Activated naive CD4-positive, alpha-beta T cell treated with anti-CD3 and anti-CD28 coated beads for 36 hours (primary cell): ENCODE measurements at regions of chr11 and their contacts with region 1.

Region 1: GRCh38 chr11:102346748-102347461 is at the start of gene BIRC2:
- DNase-seq: peak; percentile 95
- H3K4me3 Mint-ChIP-seq: peak within 1 kb of the TSS; percentile 77
- H3K27ac Mint-ChIP-seq: peak within 1 kb of the TSS; percentile 99
- H3K4me1 Mint-ChIP-seq: peaks cover 45% of the 10 kb centered on the region
- H3K27me3 Mint-ChIP-seq: no peaks in the 10 kb centered on the region
- total RNA-seq, gene BIRC2: 26.6 to 26.9 TPM

Region 2: DNA sequence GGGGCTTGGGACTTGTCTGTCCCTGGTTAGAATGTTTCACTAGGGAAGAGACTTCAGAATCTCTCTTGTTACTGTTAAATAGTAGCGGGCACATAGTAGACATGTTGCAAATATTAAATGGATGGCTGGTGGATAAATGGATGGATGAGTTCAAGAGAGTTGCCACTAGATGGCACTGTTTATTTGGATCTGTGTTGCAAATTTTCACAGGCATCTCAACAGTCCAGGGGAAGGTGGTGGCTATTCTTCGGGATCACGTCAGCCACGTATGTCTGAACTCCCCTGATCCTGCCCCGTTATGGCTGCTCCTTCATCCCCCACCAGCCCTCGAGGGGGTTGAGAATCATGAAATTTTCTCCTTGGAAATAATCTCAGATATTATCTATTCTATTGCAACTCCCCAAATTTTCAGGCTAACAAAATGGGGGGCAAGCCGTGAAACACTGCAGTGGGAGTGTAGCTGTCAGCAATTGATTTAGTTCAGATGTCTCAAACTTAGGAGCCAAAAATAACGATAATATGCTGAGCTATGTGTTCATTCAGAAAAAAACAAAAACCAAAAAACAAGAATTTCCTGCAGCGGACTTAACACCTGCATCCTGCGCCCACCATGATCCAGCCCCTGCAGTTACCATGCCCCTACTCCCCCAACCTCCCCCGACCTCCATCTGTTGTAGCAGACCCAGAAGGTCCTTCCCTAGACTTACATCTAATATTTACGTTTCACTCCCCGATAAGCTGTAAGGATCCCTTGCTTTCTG is 58.8 kb before region 1 on chr11:
- CTCF ChIA-PET with region 1: interaction called, 49 read pairs
- intact Hi-C with region 1: loop called (anchors 1 kb)
- DNase-seq: peak; percentile 46
- H3K4me3 Mint-ChIP-seq: peak overlapping the region; percentile 50
- H3K27ac Mint-ChIP-seq: no peak overlapping the region
- H3K4me1 Mint-ChIP-seq: peaks cover 16% of the 10 kb centered on the region
- H3K27me3 Mint-ChIP-seq: no peaks in the 10 kb centered on the region

Region 3: GRCh38 chr11:102361086-102362031 is 14.5 kb after region 1 on chr11:
- CTCF ChIA-PET with region 1: interaction called, 19 read pairs
- intact Hi-C with region 1: loop called (anchors 1 kb)
- DNase-seq: peak; percentile 44
- H3K4me3 Mint-ChIP-seq: peak overlapping the region; percentile 49
- H3K27ac Mint-ChIP-seq: peak overlapping the region; percentile 79
- H3K4me1 Mint-ChIP-seq: peaks cover 54% of the 10 kb centered on the region
- H3K27me3 Mint-ChIP-seq: no peaks in the 10 kb centered on the region

Region 4: DNA sequence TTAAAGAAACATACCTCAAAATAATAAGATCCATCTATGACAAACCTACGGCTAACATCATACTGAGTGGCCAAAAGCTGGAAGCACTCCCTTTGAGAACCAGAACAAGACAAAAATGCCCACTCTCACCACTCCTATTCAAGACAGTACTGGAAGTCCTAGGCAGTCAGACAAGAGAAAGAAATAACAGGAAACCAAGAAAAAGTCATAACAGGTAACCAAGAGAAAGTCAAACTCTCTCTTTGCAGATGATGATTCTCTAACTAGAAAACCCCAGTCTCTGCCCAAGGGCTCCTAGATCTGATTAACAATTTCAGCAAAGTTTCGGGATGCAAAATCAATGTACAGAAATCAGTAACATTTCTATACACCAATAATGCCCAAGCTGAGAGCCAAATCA is 70.1 kb after region 1 on chr11:
- CTCF ChIA-PET with region 1: no interaction called
- intact Hi-C with region 1: loop called (anchors 1 kb)
- DNase-seq: peak; percentile 38
- H3K4me3 Mint-ChIP-seq: peak overlapping the region; percentile 34
- H3K27ac Mint-ChIP-seq: peak overlapping the region; percentile 84
- H3K4me1 Mint-ChIP-seq: peaks cover 92% of the 10 kb centered on the region
- H3K27me3 Mint-ChIP-seq: no peaks in the 10 kb centered on the region

Region 5: DNA sequence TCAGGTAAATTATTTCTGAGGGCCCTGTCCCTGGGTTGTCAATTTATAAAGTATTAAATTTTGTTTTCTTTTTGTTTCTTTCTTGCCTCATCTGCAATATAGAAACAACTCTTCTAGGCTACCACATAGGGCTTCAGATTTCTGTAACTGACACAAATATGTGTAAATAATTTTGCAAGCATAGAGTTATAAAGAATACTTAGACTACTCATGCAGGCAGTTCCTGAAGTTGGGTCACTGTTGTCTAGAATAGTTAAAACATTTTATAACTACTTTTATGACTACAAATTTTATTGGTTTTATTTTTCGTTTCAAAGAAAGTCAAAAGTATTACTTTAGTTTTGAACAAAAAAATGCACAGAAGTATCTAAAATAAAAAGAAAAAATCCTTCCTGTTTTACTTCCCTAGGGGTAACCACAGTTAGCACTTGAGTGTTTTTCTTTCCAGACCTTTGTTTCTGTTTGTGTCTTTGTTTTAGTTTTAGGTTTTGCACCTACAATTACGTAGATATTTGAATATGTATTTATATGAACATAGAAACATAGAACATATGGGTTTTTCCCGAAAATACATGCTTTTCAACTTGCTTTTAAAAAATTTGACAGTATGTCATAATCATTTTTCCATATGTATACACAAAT is 118.1 kb after region 1 on chr11:
- CTCF ChIA-PET with region 1: interaction called, 4 read pairs
- intact Hi-C with region 1: loop called (anchors 1 kb)
- DNase-seq: no peak
- H3K4me3 Mint-ChIP-seq: no peak overlapping the region
- H3K27ac Mint-ChIP-seq: peak overlapping the region; percentile 11
- H3K4me1 Mint-ChIP-seq: peaks cover 75% of the 10 kb centered on the region
- H3K27me3 Mint-ChIP-seq: no peaks in the 10 kb centered on the region

Region 6: DNA sequence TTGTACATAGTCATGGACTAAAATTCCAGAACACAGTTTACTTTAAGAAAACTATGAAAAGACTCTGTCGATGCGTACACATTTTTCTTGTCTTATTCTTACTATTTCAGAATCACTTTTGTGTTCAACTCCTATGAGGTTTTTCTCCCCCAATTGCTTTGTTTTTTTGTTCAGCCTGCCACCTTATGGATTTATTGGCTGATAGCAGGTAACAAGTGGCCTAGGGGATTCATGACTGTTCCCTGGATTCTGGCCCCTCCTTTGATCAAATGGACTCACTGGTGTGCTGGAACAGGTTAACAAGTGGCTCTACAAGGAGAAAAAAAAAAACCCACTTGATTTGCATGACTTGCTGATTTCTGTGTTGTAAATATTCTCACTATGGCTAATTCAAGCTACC is 267.6 kb after region 1 on chr11:
- CTCF ChIA-PET with region 1: interaction called, 50 read pairs
- intact Hi-C with region 1: no loop called
- DNase-seq: no peak
- H3K4me3 Mint-ChIP-seq: no peak overlapping the region
- H3K27ac Mint-ChIP-seq: no peak overlapping the region
- H3K4me1 Mint-ChIP-seq: peaks cover 13% of the 10 kb centered on the region
- H3K27me3 Mint-ChIP-seq: no peaks in the 10 kb centered on the region